ENCODE measurements at regions of chr6 and their contacts with region 1.

Region 1: DNA sequence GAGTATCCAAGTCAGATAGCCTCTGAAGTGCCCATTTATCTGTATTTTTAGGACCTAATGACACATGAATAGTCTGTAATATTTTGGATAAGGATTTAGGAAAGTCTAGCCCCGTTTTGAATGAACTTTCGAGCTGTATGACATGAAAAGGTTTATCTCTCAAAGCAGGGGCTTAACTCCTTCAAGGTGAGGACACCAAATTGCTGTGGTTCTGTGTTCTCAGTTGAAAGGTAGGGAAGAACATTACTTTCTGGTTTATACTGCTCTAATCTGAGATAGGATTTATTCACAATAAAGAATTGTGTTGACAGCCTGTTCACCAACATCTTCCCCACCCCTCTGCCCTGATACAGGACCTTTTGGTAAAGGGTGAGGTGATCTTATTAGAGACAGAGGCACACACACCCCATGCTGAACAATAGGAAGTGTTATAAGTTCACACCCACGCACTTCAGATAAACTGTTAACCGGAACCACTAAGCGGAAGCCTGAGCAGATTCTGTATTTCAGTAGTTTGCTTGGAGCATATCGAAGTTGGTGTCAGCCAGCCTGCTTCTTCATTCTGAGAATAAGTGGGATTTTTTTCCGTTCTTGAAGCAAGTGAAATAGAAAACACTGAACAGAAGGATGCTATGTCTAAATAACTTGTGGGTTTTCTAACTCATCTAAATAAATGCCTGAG is 223.3 kb downstream of the TMEM242 start:
- DNase-seq: peak; percentile 76
- ATAC-seq: peak; percentile 95
- H3K4me3 ChIP-seq: peak overlapping the region in 1 of 5 experiments; percentile 13
- H3K4me3 Mint-ChIP-seq: peak overlapping the region; percentile 70
- H3K27ac ChIP-seq: peak overlapping the region; percentile 40 to 76
- H3K27ac Mint-ChIP-seq: peak overlapping the region; percentile 87
- H3K4me1 ChIP-seq: peaks cover 33 to 35% of the 10 kb centered on the region in 2 donors
- H3K4me1 Mint-ChIP-seq: peaks cover 54% of the 10 kb centered on the region
- H3K27me3 ChIP-seq: no peaks in the 10 kb centered on the region
- H3K27me3 Mint-ChIP-seq: no peaks in the 10 kb centered on the region
- CTCF ChIP-seq: no peak

Region 2: DNA sequence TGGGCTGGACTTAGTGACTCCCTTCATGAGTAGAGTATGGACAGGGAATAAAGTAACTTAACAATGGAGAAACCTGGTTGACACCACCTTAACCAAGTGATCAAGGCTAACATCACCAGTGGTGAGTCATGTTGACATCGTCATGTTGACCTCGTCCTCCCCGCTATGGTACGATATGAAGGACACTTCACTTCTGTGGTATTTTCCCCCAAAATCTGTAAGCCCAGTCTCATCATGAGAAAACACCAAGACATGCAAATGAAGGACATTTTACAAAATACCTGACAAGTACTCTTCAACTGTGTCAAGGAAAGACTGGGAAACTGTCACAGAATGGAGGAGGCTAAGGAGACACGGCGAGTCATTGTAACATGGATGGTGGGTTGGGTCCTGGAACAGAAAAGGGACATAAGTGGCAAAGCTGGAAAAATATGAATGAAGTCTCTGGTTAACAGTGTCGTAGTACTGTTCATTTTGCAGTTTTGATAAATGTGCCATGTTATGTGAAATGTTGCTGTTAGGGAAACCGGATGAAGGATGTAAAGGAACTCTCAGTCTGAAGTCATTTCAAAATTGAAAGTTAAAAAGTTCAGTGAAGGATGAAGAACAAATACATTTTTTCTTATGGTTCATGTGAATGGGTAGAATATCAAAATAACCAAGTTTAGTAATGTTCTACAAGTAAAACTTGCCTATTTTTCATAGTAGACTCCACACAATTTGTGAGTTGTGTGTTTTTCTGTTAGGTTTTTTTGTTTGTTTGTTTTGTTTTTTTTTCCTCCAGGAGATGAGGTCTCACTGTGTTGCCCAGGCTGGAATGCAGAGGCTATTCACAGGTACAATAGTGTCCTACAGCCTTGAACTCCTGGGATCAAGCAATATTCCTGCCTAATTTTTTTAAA is 24.3 kb before region 1 on chr6:
- CTCF ChIA-PET with region 1: no interaction called
- POLR2A ChIA-PET with region 1: no interaction called
- intact Hi-C with region 1: loop called (anchors 2 kb)
- DNase-seq: no peak
- ATAC-seq: peak; percentile 28
- H3K4me3 ChIP-seq: peak overlapping the region in 1 of 5 experiments; percentile 36
- H3K4me3 Mint-ChIP-seq: peak overlapping the region; percentile 86
- H3K27ac ChIP-seq: peak overlapping the region; percentile 37 to 44
- H3K27ac Mint-ChIP-seq: peak overlapping the region; percentile 76
- H3K4me1 ChIP-seq: peaks cover 38 to 58% of the 10 kb centered on the region in 2 donors
- H3K4me1 Mint-ChIP-seq: peaks cover 78% of the 10 kb centered on the region
- H3K27me3 ChIP-seq: no peaks in the 10 kb centered on the region
- H3K27me3 Mint-ChIP-seq: no peaks in the 10 kb centered on the region
- CTCF ChIP-seq: no peak